Natural killer cell (primary cell): ENCODE measurements at regions of chr1 and their contacts with region 1.

Region 1: GRCh38 chr1:156728597-156729462 is at the start of gene ISG20L2:
- DNase-seq: peak; percentile 95 to 99
- ATAC-seq: peak; percentile 92 to 98 (median 92)
- H3K4me3 ChIP-seq: peak within 1 kb of the TSS; percentile 98
- H3K4me3 Mint-ChIP-seq: peak within 1 kb of the TSS; percentile 98
- H3K27ac ChIP-seq: peak within 1 kb of the TSS; percentile 99
- H3K27ac Mint-ChIP-seq: no peak within 1 kb of the TSS
- H3K4me1 ChIP-seq: peaks cover 45% of the 10 kb centered on the region
- H3K4me1 Mint-ChIP-seq: peaks cover 15 to 24% of the 10 kb centered on the region in 2 donors
- H3K27me3 ChIP-seq: no peaks in the 10 kb centered on the region
- H3K27me3 Mint-ChIP-seq: no peaks in the 10 kb centered on the region
- CTCF ChIP-seq: no peak
- total RNA-seq, gene ISG20L2: 60.3 to 71.9 (median 68.7) TPM

Region 2: GRCh38 chr1:156625436-156626078 is 103.3 kb before region 1 on chr1:
- intact Hi-C with region 1: loop called (anchors 1 kb)
- DNase-seq: peak; percentile 67 to 85
- ATAC-seq: peak; percentile 73 to 78 (median 77)
- H3K4me3 ChIP-seq: no peak overlapping the region
- H3K4me3 Mint-ChIP-seq: peak overlapping the region; percentile 83
- H3K27ac ChIP-seq: no peak overlapping the region
- H3K27ac Mint-ChIP-seq: no peak overlapping the region
- H3K4me1 ChIP-seq: peaks cover 23% of the 10 kb centered on the region
- H3K4me1 Mint-ChIP-seq: peaks cover 7 to 8% of the 10 kb centered on the region in 2 donors
- H3K27me3 ChIP-seq: peaks cover 30% of the 10 kb centered on the region
- H3K27me3 Mint-ChIP-seq: peaks cover 51 to 55% of the 10 kb centered on the region in 2 donors
- CTCF ChIP-seq: peak; percentile 91

Region 3: GRCh38 chr1:156740679-156741612 is 12.1 kb after region 1 on chr1 and contains the start of gene MRPL24:
- intact Hi-C with region 1: loop called (anchors 1 kb)
- DNase-seq: peak; percentile 91 to 99
- ATAC-seq: peak; percentile 91 to 97 (median 93)
- H3K4me3 ChIP-seq: peak within 1 kb of the TSS; percentile 52
- H3K4me3 Mint-ChIP-seq: peak within 1 kb of the TSS; percentile 92
- H3K27ac ChIP-seq: peak within 1 kb of the TSS; percentile 84
- H3K27ac Mint-ChIP-seq: peak within 1 kb of the TSS; percentile 95 to 96
- H3K4me1 ChIP-seq: peaks cover 15% of the 10 kb centered on the region
- H3K4me1 Mint-ChIP-seq: peaks cover 30% of the 10 kb centered on the region in 2 donors
- H3K27me3 ChIP-seq: no peaks in the 10 kb centered on the region
- H3K27me3 Mint-ChIP-seq: no peaks in the 10 kb centered on the region
- CTCF ChIP-seq: no peak
- total RNA-seq, gene MRPL24: 15.9 to 19.7 (median 18.7) TPM

Region 4: DNA sequence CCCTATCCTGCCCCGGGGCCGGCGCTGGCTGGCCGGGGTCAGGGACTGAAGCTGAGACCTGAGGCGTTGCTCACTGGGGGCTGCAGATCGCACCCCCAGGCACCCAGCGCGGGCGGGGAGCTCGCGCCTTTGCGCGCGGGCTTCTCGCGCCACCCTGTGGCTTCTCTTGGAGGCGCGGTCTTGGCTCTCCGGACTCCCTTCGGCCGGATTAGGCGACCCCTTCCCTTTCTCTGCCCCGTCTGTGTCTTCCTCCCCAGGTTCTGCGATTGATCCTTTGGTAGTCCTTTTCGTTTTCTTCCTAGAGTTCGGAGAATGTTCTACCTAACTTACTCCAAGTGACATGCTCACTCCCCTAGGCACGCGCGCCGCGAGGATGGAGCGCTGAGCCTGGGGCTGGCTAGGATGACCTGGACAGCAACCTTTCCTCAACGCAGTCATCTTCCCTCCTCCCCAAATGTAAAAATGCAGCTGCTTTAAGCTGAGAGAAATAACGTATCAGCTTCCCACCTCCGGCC is 131.3 kb after region 1 on chr1:
- intact Hi-C with region 1: loop called (anchors 2 kb)
- DNase-seq: peak; percentile 66 to 78
- ATAC-seq: peak; percentile 70 to 77 (median 75)
- H3K4me3 ChIP-seq: peak overlapping the region; percentile 25
- H3K4me3 Mint-ChIP-seq: peak overlapping the region; percentile 84
- H3K27ac ChIP-seq: no peak overlapping the region
- H3K27ac Mint-ChIP-seq: peak overlapping the region in 1 of 2 donors; percentile 78
- H3K4me1 ChIP-seq: peaks cover 25% of the 10 kb centered on the region
- H3K4me1 Mint-ChIP-seq: peaks cover 12 to 31% of the 10 kb centered on the region in 2 donors
- H3K27me3 ChIP-seq: peaks cover 39% of the 10 kb centered on the region
- H3K27me3 Mint-ChIP-seq: peaks cover 48 to 50% of the 10 kb centered on the region in 2 donors
- CTCF ChIP-seq: peak; percentile 91